ENCODE measurements at regions of chr16 and their contacts with region 1.

Region 1: DNA sequence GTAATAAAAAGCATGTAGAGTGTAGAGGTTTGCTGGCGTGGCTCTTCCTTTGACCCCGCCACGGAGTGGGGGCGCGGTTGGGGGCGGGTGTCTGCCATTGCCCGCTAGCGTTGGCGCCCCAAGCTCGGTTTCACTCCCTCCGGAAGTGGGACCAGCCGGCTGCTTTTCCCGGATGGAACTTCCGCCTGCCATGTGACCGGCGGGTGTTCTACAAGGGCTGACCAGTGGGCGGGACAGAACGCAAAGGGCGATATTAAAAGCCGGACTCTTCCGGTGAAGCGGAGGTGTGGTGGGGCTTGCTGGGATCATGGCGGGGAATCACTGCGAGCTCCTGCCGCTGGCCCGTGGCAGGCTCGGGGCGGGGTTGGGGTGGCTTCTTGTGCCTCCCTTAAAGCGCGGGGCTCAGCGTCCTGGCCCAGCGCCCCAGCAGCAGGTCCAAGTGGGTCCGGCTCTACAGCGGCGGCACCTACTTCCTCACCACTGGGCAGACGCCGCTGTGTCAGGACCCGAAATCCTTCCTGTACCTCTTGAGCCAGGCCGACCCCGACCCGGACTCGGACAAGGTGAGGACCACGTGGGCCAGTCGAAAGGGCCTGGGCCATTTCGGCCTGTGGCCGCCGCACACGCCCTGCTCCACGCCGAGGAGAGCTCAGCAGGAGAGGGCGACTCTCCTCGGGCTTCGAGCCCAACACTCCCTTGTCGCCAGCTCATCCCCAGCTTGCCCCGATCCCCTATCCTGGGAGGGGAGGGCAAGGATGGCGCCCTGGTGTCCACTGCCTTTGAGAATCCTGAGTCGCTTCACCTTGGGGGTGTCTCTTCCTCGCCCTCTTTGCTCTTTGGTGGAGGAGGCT is 65.6 kb downstream of the PDPK1 start:
- DNase-seq: peak; percentile 96
- H3K4me3 ChIP-seq: peak overlapping the region; percentile 44 to 56 (median 50)
- H3K27ac ChIP-seq: peak overlapping the region; percentile 60
- H3K4me1 ChIP-seq: peaks cover 3% of the 10 kb centered on the region
- H3K27me3 ChIP-seq: no peaks in the 10 kb centered on the region
- CTCF ChIP-seq: no peak
- POLR2A ChIP-seq: peak; percentile 97

Region 2: DNA sequence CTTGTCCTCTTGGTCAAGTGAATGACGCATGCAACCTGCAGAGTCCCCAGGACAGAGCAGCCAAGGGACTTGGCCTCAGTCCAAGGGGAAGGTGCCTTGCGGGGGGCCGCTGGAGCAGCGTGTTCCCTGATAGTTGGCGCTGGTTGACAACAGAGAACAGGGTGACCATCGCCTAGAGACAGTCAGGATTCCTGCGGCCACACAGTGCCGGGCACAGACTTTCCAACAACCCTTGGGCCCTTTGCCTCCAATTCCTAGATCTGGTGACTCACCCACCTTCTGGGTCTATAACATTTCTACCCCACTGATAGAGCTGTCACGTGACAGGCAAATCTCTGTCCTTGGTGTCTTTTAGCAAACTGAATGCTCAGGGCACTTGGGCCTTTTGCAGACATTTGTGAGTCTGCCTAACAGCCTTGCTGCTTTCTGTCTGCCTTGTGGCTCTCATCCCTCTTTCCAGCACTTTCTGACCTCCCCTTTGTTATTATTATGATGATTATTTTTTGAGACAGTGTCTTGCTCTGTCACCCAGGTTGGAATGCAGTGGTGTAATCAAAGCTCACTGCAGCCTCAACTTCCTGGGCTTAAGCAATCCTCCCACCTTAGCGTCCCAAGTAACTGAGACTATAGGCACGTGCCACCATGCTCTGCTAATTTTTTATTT is 155.3 kb before region 1 on chr16:
- CTCF ChIA-PET with region 1: no interaction called
- POLR2A ChIA-PET with region 1: no interaction called
- dilution Hi-C with region 1: no loop called
- intact Hi-C with region 1: no loop called
- DNase-seq: no peak
- H3K4me3 ChIP-seq: no peak overlapping the region
- H3K27ac ChIP-seq: no peak overlapping the region
- H3K4me1 ChIP-seq: no peaks in the 10 kb centered on the region
- H3K27me3 ChIP-seq: no peaks in the 10 kb centered on the region
- CTCF ChIP-seq: no peak
- POLR2A ChIP-seq: no peak

Region 3: DNA sequence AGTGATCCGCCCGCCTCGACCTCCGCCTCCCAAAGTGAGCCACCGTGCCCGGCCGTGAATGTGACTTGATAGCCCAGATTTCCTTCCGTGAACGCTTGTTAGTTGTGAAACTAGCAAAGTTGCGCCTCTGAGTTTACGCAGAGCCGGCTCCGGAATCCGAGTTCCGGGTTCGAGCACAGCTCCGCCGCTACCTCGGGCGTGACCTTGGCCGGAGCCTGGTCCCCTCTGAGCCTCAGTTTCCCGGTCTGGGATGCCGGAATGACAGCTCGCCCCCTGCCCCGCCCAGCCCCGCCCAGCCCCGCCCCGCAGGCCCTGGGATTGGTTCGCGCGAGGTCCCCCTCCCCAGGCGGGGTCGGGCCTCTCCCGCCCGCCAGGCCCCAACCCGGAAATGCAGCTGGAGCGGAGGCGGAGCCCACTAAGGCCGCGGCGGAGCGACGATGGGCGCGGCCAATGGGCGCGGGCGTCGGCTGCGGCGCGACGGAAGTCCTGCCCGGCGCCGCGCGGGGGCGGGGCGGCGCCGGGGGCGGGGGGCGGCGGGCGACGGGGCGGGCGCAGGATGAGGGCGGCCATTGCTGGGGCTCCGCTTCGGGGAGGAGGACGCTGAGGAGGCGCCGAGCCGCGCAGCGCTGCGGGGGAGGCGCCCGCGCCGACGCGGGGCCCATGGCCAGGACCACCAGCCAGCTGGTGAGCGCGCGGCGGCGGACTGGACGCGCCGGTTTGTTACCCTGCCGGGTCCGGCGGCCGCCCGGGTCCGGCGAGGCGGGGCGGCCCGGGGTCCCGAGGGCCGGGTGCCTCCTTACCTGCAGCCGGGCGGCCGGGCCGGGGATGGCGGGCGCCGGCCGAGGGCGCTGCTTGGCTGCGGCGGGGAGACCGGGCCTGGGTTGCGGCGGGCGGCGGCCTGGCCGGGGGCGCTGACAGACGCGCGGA is 65.7 kb before region 1 on chr16 and contains the start of gene PDPK1:
- CTCF ChIA-PET with region 1: no interaction called
- POLR2A ChIA-PET with region 1: no interaction called
- dilution Hi-C with region 1: no loop called
- intact Hi-C with region 1: loop called (anchors 2 kb)
- DNase-seq: peak; percentile 94
- H3K4me3 ChIP-seq: peak within 1 kb of the TSS in 2 of 3 experiments; percentile 55 to 77
- H3K27ac ChIP-seq: no peak within 1 kb of the TSS
- H3K4me1 ChIP-seq: peaks cover 14% of the 10 kb centered on the region
- H3K27me3 ChIP-seq: no peaks in the 10 kb centered on the region
- CTCF ChIP-seq: no peak
- POLR2A ChIP-seq: peak; percentile 49
- total RNA-seq, gene PDPK1: 37.3 and 40.8 TPM in 2 replicates